Breast epithelium (tissue), 4 donors: ENCODE measurements at regions of chr6 and their contacts with region 1.

Region 1: DNA sequence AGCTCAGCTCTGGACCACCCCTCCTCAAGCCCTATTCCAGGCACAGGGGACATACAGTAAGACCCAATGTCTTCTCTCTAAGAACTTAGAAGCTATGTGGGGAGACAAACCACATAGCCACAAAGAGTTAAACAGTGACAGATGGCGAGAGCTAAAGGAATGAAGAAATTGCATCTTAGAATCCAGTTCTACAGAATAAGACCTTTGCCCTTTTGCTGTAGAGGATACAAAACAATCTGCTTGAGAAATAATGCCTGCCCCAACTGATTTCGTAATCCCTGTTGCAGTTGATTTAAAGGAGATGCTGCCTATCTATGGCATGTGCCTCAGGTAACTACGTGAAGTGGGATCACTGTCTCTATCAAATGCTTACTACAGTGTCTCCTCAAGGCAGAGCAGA is 31.2 kb downstream of the TNFRSF21 start:
- DNase-seq: no peak
- H3K4me3 ChIP-seq: no peak overlapping the region
- H3K27ac ChIP-seq: no peak overlapping the region
- H3K4me1 ChIP-seq: no peaks in the 10 kb centered on the region
- H3K27me3 ChIP-seq: no peaks in the 10 kb centered on the region
- CTCF ChIP-seq: no peak
- POLR2A ChIP-seq: no peak

Region 2: GRCh38 chr6:46749731-46750130 is 528.8 kb before region 1 on chr6:
- intact Hi-C with region 1: loop called (anchors 5 kb)
- DNase-seq: no peak
- H3K4me3 ChIP-seq: no peak overlapping the region
- H3K27ac ChIP-seq: no peak overlapping the region
- H3K4me1 ChIP-seq: no peaks in the 10 kb centered on the region
- H3K27me3 ChIP-seq: no peaks in the 10 kb centered on the region
- CTCF ChIP-seq: no peak
- POLR2A ChIP-seq: no peak